ENCODE measurements at regions of chr5 and their contacts with region 1.

Region 1: DNA sequence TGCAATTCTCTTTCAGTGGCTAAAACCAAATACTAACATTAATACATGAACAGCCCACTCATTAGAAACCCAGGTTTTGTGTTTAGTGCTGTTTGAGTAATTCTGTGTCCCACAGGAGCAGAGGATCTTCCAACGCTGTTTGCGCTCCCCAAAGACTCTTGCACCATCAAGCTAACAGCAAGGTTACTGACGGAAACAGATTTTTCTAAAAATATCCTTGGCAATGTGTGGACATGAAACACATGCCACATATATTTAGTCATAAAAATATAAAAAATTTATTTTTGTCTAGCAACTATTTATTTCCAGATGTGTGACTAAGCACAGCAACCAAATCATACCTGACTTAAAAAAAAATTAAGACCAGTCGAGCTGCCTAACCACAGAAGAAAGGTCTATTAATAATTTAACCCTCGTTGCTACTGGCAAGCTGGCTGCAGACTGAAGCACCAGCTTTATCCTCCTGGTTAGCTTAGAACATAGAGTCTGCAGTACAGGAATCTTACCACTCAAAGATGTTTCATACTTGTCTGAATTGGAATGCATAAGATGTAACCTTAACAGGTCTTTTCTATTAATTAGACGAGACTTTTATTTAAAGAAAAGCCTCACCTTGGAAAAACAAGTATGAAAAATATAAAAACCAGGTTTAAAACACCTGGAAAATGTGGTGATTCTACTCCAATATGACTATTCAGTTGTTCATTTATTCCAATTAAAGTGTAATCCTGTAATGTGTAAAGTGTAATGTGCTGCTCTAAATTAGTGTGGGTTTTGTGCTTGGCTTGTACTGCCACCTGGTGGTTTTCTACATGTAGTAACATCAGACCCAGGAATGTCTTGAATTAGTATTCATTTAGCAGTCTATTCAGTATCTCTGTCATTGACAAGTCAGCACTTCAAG is 272.5 kb downstream of the EPB41L4A start:
- DNase-seq: no peak

Region 2: GRCh38 chr5:111158105-111158744 is 988.4 kb before region 1 on chr5:
- intact Hi-C with region 1: loop called (anchors 5 kb)
- DNase-seq: no peak

Region 3: DNA sequence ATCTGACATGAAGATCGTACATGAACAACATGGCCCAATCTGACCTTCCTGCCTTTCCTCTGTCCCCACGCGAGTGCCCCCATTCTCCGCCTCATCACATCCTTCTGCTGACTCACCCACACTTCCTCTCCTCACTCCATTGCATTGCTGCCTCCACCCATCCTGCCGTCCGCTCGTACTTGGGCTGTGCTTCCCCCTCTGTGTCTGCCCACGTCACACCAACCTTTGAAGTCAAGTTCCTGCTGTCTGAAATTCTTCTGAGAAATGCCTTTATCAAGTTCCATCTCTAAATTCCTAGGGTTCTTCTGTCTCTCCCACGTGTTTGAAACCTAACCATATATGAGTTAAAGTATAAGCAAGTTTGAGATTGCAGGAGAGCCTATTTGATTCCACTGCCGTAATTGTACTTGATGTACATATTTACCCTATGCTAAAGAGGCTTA is 616.3 kb before region 1 on chr5:
- intact Hi-C with region 1: loop called (anchors 1 kb)
- DNase-seq: peak; percentile 88

Region 4: GRCh38 chr5:111680737-111681413 is 465.7 kb before region 1 on chr5:
- intact Hi-C with region 1: loop called (anchors 5 kb)
- DNase-seq: no peak

Region 5: GRCh38 chr5:111757355-111758283 is 389.0 kb before region 1 on chr5:
- intact Hi-C with region 1: loop called (anchors 5 kb)
- DNase-seq: peak; percentile 97

Region 6: GRCh38 chr5:111853748-111854147 is 292.8 kb before region 1 on chr5:
- intact Hi-C with region 1: loop called (anchors 5 kb)
- DNase-seq: no peak

Measured in cardiac septum (tissue), 1 donor.